Caco-2 (cell line): ENCODE measurements at regions of chr1 and their contacts with region 1.

Region 1: DNA sequence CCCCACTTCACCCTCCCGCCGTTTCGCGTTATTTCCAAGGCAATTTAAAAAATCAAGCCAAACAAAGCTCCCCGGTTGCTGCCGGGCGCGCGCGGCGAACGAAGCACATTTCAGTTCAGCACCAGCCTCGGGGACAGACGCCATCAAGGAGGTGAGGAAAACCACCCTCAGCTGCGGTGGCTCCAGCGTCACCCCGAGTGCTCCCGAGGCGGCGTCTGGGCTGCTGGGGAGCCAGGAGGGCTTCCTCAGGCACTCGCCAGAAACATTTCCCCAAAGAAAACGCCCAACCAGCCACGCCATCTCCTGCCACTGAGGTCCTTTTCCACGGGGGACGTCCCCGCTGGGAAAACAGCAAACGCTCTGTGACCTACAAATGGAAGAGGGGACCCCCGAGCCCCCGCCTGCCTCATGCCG is 623 bp downstream of the GNG4 start:
- DNase-seq: peak; percentile 67 to 77
- H3K4me3 ChIP-seq: peak overlapping the region; percentile 57
- H3K4me3 Mint-ChIP-seq: peak overlapping the region; percentile 68
- H3K27ac Mint-ChIP-seq: peak overlapping the region; percentile 8
- H3K4me1 ChIP-seq: peaks cover 18% of the 10 kb centered on the region
- H3K4me1 Mint-ChIP-seq: peaks cover 7% of the 10 kb centered on the region
- H3K27me3 ChIP-seq: no peaks in the 10 kb centered on the region
- H3K27me3 Mint-ChIP-seq: peaks cover 4% of the 10 kb centered on the region
- CTCF ChIP-seq: no peak

Region 2: DNA sequence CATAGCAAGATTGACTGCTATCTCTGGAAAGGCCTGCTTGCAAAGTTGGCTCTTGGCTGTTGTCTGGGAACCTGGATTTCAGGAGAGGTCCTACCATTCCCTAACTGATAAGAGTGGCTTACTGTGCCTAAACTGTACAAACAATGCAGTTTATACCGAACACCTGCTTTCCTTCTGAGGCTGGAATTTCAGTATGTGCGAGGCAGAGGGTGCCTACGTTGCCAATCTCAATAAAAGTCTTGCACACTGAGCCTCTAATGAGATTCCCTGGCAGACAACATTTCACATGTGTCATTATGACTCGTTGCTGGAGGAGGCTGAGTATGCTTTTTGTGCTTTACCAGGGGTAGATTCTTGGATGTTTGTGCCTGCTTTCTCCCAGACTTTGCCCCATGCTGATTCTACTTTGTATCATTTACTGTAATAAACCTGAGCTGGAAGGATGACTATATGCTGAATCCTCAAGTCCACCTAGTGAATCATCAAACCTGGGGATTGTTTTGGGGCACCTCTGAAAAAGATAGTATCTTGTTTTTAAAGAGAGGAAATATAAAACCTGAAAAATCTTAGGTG is 59.5 kb after region 1 on chr1:
- CTCF ChIA-PET with region 1: no interaction called
- POLR2A ChIA-PET with region 1: no interaction called
- intact Hi-C with region 1: no loop called
- DNase-seq: peak in 1 of 2 experiments; percentile 13
- H3K4me3 ChIP-seq: no peak overlapping the region
- H3K4me3 Mint-ChIP-seq: no peak overlapping the region
- H3K27ac Mint-ChIP-seq: no peak overlapping the region
- H3K4me1 ChIP-seq: peaks cover 28% of the 10 kb centered on the region; the same call in 1 of the 2 replicates
- H3K4me1 Mint-ChIP-seq: peaks cover 19% of the 10 kb centered on the region
- H3K27me3 ChIP-seq: no peaks in the 10 kb centered on the region
- H3K27me3 Mint-ChIP-seq: no peaks in the 10 kb centered on the region
- CTCF ChIP-seq: no peak

Region 3: GRCh38 chr1:235734335-235734734 is 85.4 kb after region 1 on chr1:
- CTCF ChIA-PET with region 1: no interaction called
- POLR2A ChIA-PET with region 1: no interaction called
- intact Hi-C with region 1: loop called (anchors 5 kb)
- DNase-seq: no peak
- H3K4me3 ChIP-seq: no peak overlapping the region
- H3K4me3 Mint-ChIP-seq: no peak overlapping the region
- H3K27ac Mint-ChIP-seq: no peak overlapping the region
- H3K4me1 ChIP-seq: no peaks in the 10 kb centered on the region
- H3K4me1 Mint-ChIP-seq: no peaks in the 10 kb centered on the region
- H3K27me3 ChIP-seq: no peaks in the 10 kb centered on the region
- H3K27me3 Mint-ChIP-seq: no peaks in the 10 kb centered on the region
- CTCF ChIP-seq: no peak

Region 4: GRCh38 chr1:235783148-235783776 is 134.3 kb after region 1 on chr1:
- CTCF ChIA-PET with region 1: no interaction called
- POLR2A ChIA-PET with region 1: no interaction called
- intact Hi-C with region 1: loop called (anchors 10 kb)
- DNase-seq: peak in 1 of 2 experiments; percentile 26
- H3K4me3 ChIP-seq: no peak overlapping the region
- H3K4me3 Mint-ChIP-seq: no peak overlapping the region
- H3K27ac Mint-ChIP-seq: no peak overlapping the region
- H3K4me1 ChIP-seq: no peaks in the 10 kb centered on the region
- H3K4me1 Mint-ChIP-seq: no peaks in the 10 kb centered on the region
- H3K27me3 ChIP-seq: no peaks in the 10 kb centered on the region
- H3K27me3 Mint-ChIP-seq: no peaks in the 10 kb centered on the region
- CTCF ChIP-seq: peak; percentile 41 to 62

Region 5: GRCh38 chr1:235843461-235843961 is 194.6 kb after region 1 on chr1:
- CTCF ChIA-PET with region 1: no interaction called
- POLR2A ChIA-PET with region 1: no interaction called
- intact Hi-C with region 1: loop called (anchors 10 kb)
- DNase-seq: peak in 1 of 2 experiments; percentile 35
- H3K4me3 ChIP-seq: no peak overlapping the region
- H3K4me3 Mint-ChIP-seq: no peak overlapping the region
- H3K27ac Mint-ChIP-seq: no peak overlapping the region
- H3K4me1 ChIP-seq: no peaks in the 10 kb centered on the region
- H3K4me1 Mint-ChIP-seq: peaks cover 12% of the 10 kb centered on the region
- H3K27me3 ChIP-seq: no peaks in the 10 kb centered on the region
- H3K27me3 Mint-ChIP-seq: peaks cover 4% of the 10 kb centered on the region
- CTCF ChIP-seq: peak; percentile 55 to 69